Esophagus squamous epithelium (tissue), 5 donors: ENCODE measurements at regions of chr6 and their contacts with region 1.

Region 1: GRCh38 chr6:36360241-36361054 is 23.8 kb upstream of the BNIP5 start:
- DNase-seq: peak; percentile 35
- H3K4me3 ChIP-seq: no peak overlapping the region
- H3K27ac ChIP-seq: no peak overlapping the region
- H3K4me1 ChIP-seq: peaks cover 4 to 19% (median 5%) of the 10 kb centered on the region in 3 donors
- H3K27me3 ChIP-seq: no peaks in the 10 kb centered on the region
- CTCF ChIP-seq: peak; percentile 73 to 86 (median 82)
- POLR2A ChIP-seq: no peak

Region 2: GRCh38 chr6:36123257-36124139 is 236.9 kb before region 1 on chr6:
- intact Hi-C with region 1: loop called (anchors 10 kb)
- DNase-seq: peak; percentile 48
- H3K4me3 ChIP-seq: peak overlapping the region in 1 of 4 donors; percentile 36
- H3K27ac ChIP-seq: peak overlapping the region in 3 of 4 donors; percentile 15 to 20 (median 19)
- H3K4me1 ChIP-seq: peaks cover 21 to 67% (median 29%) of the 10 kb centered on the region in 3 donors
- H3K27me3 ChIP-seq: no peaks in the 10 kb centered on the region
- CTCF ChIP-seq: peak; percentile 72 to 84 (median 76)
- POLR2A ChIP-seq: no peak

Region 3: GRCh38 chr6:36302227-36302976 is 58.0 kb before region 1 on chr6:
- intact Hi-C with region 1: loop called (anchors 5 kb)
- DNase-seq: peak; percentile 29
- H3K4me3 ChIP-seq: no peak overlapping the region
- H3K27ac ChIP-seq: peak overlapping the region in 1 of 4 donors; percentile 21
- H3K4me1 ChIP-seq: peaks cover 5 to 16% (median 6%) of the 10 kb centered on the region in 3 donors
- H3K27me3 ChIP-seq: peaks cover 0 to 3% (median 0%) of the 10 kb centered on the region in 4 donors
- CTCF ChIP-seq: peak; percentile 82 to 96 (median 93)
- POLR2A ChIP-seq: no peak